ENCODE measurements at regions of chr11 and their contacts with region 1.

Region 1: GRCh38 chr11:120303004-120303637 is 22.0 kb upstream of the TLCD5 start:
- DNase-seq: peak; percentile 65
- H3K4me3 Mint-ChIP-seq: no peak overlapping the region
- H3K27ac Mint-ChIP-seq: no peak overlapping the region
- H3K4me1 Mint-ChIP-seq: no peaks in the 10 kb centered on the region
- H3K27me3 Mint-ChIP-seq: peaks cover 19% of the 10 kb centered on the region

Region 2: GRCh38 chr11:120172054-120172911 is 130.8 kb before region 1 on chr11:
- CTCF ChIA-PET with region 1: interaction called, 66 read pairs
- POLR2A ChIA-PET with region 1: no interaction called
- intact Hi-C with region 1: loop called (anchors 1 kb)
- DNase-seq: peak; percentile 63
- H3K4me3 Mint-ChIP-seq: no peak overlapping the region
- H3K27ac Mint-ChIP-seq: no peak overlapping the region
- H3K4me1 Mint-ChIP-seq: peaks cover 7% of the 10 kb centered on the region
- H3K27me3 Mint-ChIP-seq: peaks cover 53% of the 10 kb centered on the region

Region 3: DNA sequence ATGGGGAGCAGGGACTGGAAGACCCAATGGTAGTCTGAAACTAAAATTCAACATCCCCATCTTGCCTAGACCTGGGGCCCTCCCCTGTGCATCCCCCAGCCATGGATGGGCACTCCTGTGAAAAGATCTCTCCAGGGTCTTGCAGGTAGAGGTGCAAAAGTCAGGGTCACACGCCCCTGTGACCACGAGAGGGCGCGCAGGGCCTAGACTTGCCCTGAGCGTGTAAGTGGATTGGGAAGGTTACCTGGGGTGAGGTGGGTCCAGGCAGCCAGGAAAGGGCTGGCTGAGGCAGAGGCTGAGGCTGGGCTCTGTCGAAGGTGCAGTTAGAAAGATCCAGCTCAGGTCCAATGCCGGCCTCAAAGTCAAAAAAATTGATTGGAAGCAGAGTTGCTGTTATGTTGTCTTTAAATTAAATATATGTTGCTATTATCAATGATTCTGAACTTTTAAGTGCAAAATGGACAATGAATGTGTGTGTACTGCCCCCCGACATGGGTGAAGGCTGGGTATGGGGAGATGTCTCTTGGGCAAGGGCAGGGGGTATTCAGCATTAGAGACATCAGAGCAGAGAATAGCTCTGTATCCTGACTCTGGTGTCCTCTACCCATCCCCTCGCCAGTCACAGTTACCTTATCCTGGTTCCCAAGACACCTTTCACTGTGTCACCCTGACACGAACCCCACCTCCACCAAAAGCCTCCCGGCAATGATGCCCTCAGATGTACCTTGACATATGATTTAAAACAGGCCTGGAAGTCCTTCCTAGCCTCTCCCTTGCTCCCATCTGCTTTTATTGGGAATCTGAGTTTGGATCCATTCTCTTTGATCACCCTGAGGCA is 67.9 kb before region 1 on chr11:
- CTCF ChIA-PET with region 1: interaction called, 225 read pairs
- POLR2A ChIA-PET with region 1: interaction called, 3 read pairs
- intact Hi-C with region 1: loop called (anchors 1 kb)
- DNase-seq: peak; percentile 76
- H3K4me3 Mint-ChIP-seq: no peak overlapping the region
- H3K27ac Mint-ChIP-seq: no peak overlapping the region
- H3K4me1 Mint-ChIP-seq: peaks cover under 1% of the 10 kb centered on the region
- H3K27me3 Mint-ChIP-seq: peaks cover 51% of the 10 kb centered on the region

Region 4: GRCh38 chr11:120248551-120249278 is 54.4 kb before region 1 on chr11:
- CTCF ChIA-PET with region 1: interaction called, 33 read pairs
- POLR2A ChIA-PET with region 1: no interaction called
- intact Hi-C with region 1: no loop called
- DNase-seq: no peak
- H3K4me3 Mint-ChIP-seq: no peak overlapping the region
- H3K27ac Mint-ChIP-seq: no peak overlapping the region
- H3K4me1 Mint-ChIP-seq: peaks cover 29% of the 10 kb centered on the region
- H3K27me3 Mint-ChIP-seq: peaks cover 62% of the 10 kb centered on the region

Region 5: GRCh38 chr11:120316842-120317688 is 13.9 kb after region 1 on chr11:
- CTCF ChIA-PET with region 1: interaction called, 11 read pairs
- POLR2A ChIA-PET with region 1: no interaction called
- intact Hi-C with region 1: no loop called
- DNase-seq: no peak
- H3K4me3 Mint-ChIP-seq: no peak overlapping the region
- H3K27ac Mint-ChIP-seq: no peak overlapping the region
- H3K4me1 Mint-ChIP-seq: no peaks in the 10 kb centered on the region
- H3K27me3 Mint-ChIP-seq: peaks cover 26% of the 10 kb centered on the region